ENCODE measurements at regions of chr10 and their contacts with region 1.

Region 1: GRCh38 chr10:86899670-86900276 is 57.6 kb downstream of the MMRN2 start:
- DNase-seq: no peak
- ATAC-seq: peak; percentile 65

Region 2: DNA sequence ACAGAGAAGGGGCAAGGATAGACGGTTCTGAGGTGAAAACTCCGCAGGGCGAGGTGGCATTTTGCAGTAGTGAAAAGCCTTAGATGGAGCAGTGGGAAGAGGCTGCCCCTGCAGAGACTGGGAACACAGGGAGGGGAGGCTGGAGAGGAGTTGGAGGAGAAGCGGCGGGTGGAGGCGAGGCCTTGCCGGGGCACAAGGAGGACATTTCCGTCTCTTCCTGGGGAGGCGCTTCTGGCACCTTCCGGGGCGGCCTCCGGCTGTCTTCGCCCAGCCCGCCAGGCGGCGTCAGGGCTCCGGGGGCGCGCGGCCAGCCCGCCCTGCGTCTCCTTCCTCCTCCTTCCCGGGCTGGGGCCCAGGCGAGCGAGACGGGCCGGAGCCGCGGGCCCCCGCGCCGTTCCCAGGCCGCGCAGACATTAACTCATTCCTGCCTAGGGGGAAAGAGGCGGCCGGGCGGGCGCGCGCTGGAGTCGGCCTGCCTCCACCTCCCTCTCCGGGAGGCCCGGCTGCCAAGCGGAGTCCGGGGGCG is 188.7 kb before region 1 on chr10:
- intact Hi-C with region 1: loop called (anchors 1 kb)
- DNase-seq: peak; percentile 92
- ATAC-seq: peak; percentile 84

Region 3: DNA sequence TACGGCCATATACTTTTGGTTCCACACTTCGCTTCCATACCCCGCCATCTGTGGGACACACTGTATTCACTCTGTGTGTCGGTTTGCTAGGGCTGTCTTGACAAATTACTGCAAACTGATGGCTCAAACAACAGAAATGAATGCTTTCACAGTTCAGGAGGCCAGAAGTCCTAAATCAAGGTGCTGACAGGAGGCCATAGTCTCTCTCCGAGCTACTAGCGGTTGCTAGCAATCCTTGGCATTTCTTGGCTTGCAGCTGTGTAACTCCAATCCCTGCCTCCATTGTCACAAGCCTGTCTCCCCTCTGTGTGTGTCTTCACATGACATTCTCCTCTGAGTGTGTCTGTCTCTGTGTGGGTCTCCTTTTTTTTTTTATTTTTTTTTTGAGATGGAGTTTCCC is 172.3 kb before region 1 on chr10:
- intact Hi-C with region 1: loop called (anchors 5 kb)
- DNase-seq: no peak
- ATAC-seq: no peak